Panc1 (cell line): ENCODE measurements at regions of chr14 and their contacts with region 1.

Region 1: DNA sequence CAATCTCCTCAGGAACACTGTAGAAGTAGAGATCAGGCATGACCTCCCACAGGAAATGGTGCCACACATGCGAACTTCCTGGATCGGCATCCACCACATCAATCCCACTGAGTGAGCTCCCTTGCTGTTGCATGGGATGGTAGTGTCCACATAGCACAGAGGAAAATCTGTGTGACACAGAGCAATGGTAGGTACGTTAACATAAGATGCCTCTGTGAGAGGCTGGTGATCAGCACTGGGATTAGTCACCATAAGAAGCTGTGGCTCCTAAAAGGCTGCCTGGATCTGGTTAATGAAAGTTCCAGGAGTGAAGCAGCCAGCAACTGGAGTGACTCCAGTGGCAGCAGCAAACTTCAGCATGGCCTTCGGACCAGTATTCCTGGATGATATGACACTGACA is 21.8 kb downstream of the WDHD1 start:
- DNase-seq: no peak
- ATAC-seq: no peak
- H3K4me3 ChIP-seq: no peak overlapping the region
- H3K27ac ChIP-seq: no peak overlapping the region
- H3K4me1 ChIP-seq: no peaks in the 10 kb centered on the region
- H3K27me3 ChIP-seq: no peaks in the 10 kb centered on the region
- CTCF ChIP-seq: no peak

Region 2: DNA sequence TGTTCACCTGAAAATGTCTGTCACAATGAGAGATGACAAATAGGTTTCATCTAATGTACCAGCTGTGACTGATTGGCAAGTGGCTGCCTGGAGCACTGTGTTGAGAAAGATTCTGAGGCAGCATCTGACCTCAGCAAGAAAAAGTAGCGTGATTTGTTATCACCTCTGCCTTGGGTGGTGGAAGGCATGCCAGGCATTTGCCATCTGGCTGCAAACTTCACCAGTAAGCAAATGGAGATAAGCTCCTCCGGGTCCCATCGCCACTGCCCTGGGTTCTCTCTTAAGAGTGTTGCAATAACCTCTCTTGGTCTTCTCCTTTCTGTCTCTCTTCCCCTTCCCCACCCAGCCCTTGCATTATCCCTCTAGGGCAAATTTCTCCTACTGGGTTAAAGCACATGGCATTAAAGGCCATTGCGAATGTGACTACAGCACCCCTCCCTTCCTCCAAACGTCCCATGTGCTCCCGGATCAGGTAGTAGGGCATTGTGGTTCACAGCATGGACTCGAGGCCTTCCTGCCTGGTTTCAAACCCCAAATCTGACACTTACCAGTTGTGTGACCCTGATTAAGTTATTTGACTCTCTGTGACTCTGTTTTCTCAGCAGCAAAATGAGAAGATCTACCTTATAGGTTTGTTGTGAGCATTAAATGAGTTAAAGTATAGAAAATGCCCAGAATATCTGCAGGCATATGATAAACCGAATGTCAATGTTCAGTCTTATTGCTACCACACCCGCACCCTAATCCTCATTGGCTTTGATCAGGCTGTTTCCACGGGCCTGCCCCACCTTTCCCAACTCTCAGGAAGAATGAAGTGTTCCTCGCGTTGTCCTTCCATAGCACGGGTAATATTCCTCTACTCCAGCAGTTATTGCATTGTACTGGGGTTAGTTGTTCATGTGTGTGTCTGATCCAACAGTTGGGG is 115.8 kb after region 1 on chr14:
- CTCF ChIA-PET with region 1: no interaction called
- POLR2A ChIA-PET with region 1: interaction called, 13 read pairs
- in situ Hi-C with region 1: no loop called
- intact Hi-C with region 1: no loop called
- DNase-seq: no peak
- ATAC-seq: no peak
- H3K4me3 ChIP-seq: no peak overlapping the region
- H3K27ac ChIP-seq: peak overlapping the region; percentile 35; the same call in 1 of the 2 replicates
- H3K4me1 ChIP-seq: peaks cover 11% of the 10 kb centered on the region
- H3K27me3 ChIP-seq: no peaks in the 10 kb centered on the region
- CTCF ChIP-seq: no peak